OCI-LY7 (cell line): ENCODE measurements at regions of chr14 and their contacts with region 1.

Region 1: DNA sequence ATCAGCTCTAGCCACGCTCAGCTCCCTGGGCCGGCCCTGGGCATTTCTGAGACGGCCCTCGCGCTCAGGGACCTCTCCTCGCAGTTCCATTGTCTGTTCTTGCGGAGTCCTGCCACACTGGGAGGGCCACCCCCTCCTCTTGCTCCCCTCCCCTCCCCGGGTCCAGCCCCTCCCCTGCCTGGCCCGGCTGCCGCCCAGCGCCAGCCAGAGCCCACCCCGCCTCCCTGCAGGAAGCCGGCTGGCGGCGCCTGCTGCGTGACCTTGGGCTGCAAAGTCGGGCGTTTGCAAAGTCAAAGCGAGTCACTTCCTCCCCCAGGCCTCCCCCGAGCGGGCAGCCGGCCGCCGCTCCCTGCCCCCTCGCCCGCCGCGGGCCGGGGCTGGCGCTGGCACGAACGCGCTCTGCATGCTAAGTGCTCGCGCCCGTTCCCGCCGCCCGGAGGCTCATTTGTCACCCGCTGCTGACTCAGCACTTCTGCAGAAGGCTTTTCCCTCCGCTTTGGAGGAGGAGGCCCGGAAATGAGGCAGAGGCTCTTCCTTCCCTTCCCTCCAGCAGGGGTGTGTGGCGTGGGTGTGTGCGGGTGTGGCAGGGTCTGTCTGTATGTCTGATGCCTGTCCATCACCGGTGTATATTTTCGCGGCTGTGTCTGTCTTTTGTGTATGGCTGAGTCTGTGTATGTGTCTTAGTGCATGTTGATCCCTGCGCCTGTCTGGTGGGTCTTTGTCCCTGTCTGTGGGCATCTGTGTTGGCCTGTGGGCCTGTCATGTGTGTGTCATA is 72.0 kb downstream of the IRF2BPL start:
- DNase-seq: peak; percentile 72
- H3K4me3 ChIP-seq: peak overlapping the region; percentile 60
- H3K27ac ChIP-seq: peak overlapping the region; percentile 63
- H3K4me1 ChIP-seq: peaks cover 41% of the 10 kb centered on the region
- CTCF ChIP-seq: no peak

Region 2: DNA sequence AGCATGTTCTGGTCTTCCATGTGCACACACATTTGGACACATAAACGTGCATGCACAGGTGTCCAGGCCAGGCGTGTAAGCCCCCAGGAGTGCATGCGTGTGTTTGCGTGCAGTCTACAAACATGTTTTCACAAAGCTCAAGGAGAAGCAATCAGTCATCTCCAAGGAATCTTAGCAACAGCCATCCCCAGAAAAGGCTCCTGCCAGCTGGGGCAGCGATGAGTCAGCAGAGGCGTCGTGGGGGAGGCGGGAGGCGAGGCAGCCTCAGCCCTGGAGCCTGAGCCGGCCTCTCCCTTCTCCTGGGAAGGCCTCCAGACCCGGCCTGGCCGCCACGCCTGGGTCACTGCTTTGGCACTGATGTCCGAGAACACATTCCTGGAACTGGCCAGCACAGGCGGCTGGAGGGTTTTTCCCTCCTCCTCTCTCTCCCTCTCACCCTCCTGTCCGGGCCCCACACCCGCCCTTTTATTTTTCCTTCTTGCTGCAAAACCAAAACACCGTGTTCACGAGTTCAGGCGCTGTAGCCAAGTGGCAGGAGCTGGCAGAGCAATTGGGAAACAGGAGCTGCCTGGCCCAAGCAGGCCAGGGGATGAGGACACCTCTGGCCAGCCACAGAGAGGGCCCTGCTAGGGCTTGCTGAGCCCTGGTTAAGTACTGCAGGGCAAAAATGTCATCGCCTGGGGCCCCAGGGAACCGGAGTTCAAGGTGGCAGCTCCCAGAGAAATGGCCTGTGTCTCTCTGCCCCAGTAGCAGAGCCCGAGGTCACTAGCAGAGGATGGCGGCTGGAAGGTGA is 37.6 kb before region 1 on chr14:
- CTCF ChIA-PET with region 1: no interaction called
- POLR2A ChIA-PET with region 1: no interaction called
- intact Hi-C with region 1: no loop called
- DNase-seq: no peak
- H3K4me3 ChIP-seq: no peak overlapping the region
- H3K27ac ChIP-seq: no peak overlapping the region
- H3K4me1 ChIP-seq: peaks cover 3% of the 10 kb centered on the region
- CTCF ChIP-seq: no peak; the same call in 1 of the 2 replicates

Region 3: DNA sequence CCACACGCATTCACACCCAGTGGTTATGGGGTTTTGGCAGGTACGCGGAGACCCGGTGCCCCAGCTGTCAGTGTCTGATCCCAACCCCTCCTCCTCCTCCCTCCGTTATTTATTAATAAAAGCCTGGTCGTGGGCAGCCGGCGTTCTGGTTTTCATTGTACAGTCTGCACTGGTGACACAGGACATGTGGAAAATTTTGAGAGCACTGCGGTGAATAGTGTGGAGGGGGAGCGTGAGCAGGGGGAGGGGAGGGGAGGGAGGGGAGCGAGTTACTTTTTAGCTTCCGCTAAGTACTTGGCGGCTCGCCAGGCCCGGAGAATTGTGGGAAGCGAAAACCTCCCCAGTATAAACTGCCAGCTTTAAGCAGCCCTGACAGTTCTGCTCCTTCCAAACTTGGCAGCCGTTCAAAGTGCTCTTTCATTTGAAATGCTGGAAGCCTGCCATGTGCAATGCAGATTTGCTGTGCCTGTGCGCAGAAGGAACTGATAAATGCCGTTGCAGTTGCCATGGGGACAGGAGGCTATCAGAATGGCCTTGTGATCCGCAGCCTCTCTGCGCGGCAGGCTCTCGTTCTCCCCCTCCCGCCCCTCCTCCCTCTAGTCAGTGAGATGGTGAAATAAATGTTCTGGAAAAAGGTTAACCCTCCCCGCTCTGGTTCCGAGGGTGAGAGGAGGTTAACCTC is 83.7 kb after region 1 on chr14:
- CTCF ChIA-PET with region 1: no interaction called
- POLR2A ChIA-PET with region 1: interaction called, 3 read pairs
- intact Hi-C with region 1: loop called (anchors 1 kb)
- DNase-seq: peak; percentile 94
- H3K4me3 ChIP-seq: peak overlapping the region; percentile 61
- H3K27ac ChIP-seq: peak overlapping the region; percentile 96
- H3K4me1 ChIP-seq: peaks cover 87% of the 10 kb centered on the region
- CTCF ChIP-seq: no peak

Region 4: GRCh38 chr14:77478796-77479195 is 522.3 kb after region 1 on chr14:
- CTCF ChIA-PET with region 1: no interaction called
- POLR2A ChIA-PET with region 1: no interaction called
- intact Hi-C with region 1: no loop called
- DNase-seq: peak; percentile 31
- H3K4me3 ChIP-seq: no peak overlapping the region
- H3K27ac ChIP-seq: no peak overlapping the region
- H3K4me1 ChIP-seq: peaks cover 4% of the 10 kb centered on the region
- CTCF ChIP-seq: no peak